ENCODE measurements at regions of chr16 and their contacts with region 1.

Region 1: GRCh38 chr16:79792664-79793351 is 192.3 kb upstream of the MAF start:
- DNase-seq: no peak
- ATAC-seq: no peak
- H3K4me3 ChIP-seq: no peak overlapping the region
- H3K27ac ChIP-seq: no peak overlapping the region
- H3K4me1 ChIP-seq: no peaks in the 10 kb centered on the region
- H3K27me3 ChIP-seq: peaks cover 0 to 6% (median 0%) of the 10 kb centered on the region in 7 donors
- CTCF ChIP-seq: no peak

Region 2: DNA sequence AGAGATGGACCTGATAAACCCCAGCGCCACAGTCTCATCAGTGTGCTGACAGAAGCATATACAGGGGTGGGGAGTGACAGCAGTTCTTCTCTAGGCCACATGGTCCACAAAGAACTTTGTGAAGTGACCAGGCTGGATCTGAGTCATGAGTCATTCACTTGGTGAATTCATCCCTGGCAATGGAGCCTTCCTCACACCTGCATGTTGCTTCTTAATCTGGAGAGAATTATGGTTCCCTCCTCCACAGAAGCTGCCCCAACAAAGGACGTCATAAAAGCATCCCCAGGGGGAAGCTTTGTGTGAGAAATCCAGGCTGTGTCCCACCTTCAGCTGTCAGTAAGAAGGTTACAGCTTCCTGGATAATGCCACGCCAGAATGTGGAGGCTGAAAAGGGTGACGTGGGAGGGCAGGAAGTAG is 23.3 kb after region 1 on chr16:
- intact Hi-C with region 1: no loop called
- DNase-seq: peak in 1 of 2 donors; percentile 12
- ATAC-seq: peak in 6 of 8 donors; percentile 29 to 76 (median 48)
- H3K4me3 ChIP-seq: no peak overlapping the region
- H3K27ac ChIP-seq: no peak overlapping the region
- H3K4me1 ChIP-seq: no peaks in the 10 kb centered on the region
- H3K27me3 ChIP-seq: peaks cover 0 to 9% (median 0%) of the 10 kb centered on the region in 7 donors
- CTCF ChIP-seq: no peak

Region 3: GRCh38 chr16:79850348-79850747 is 57.5 kb after region 1 on chr16:
- intact Hi-C with region 1: loop called in 1 of 10 experiments (anchors 10 kb)
- DNase-seq: no peak
- ATAC-seq: no peak
- H3K4me3 ChIP-seq: no peak overlapping the region
- H3K27ac ChIP-seq: no peak overlapping the region
- H3K4me1 ChIP-seq: no peaks in the 10 kb centered on the region
- H3K27me3 ChIP-seq: no peaks in the 10 kb centered on the region
- CTCF ChIP-seq: no peak

Measured in heart right ventricle (tissue), 16 donors.